Calu3 (cell line): ENCODE measurements at regions of chr6 and their contacts with region 1.

Region 1: GRCh38 chr6:27545271-27546046 is 72.6 kb upstream of the ZNF184 start:
- DNase-seq: peak; percentile 91
- H3K4me3 Mint-ChIP-seq: peak overlapping the region; percentile 76
- H3K27ac Mint-ChIP-seq: peak overlapping the region; percentile 91
- H3K4me1 Mint-ChIP-seq: peaks cover 29% of the 10 kb centered on the region
- H3K27me3 Mint-ChIP-seq: no peaks in the 10 kb centered on the region
- CTCF ChIP-seq: no peak

Region 2: DNA sequence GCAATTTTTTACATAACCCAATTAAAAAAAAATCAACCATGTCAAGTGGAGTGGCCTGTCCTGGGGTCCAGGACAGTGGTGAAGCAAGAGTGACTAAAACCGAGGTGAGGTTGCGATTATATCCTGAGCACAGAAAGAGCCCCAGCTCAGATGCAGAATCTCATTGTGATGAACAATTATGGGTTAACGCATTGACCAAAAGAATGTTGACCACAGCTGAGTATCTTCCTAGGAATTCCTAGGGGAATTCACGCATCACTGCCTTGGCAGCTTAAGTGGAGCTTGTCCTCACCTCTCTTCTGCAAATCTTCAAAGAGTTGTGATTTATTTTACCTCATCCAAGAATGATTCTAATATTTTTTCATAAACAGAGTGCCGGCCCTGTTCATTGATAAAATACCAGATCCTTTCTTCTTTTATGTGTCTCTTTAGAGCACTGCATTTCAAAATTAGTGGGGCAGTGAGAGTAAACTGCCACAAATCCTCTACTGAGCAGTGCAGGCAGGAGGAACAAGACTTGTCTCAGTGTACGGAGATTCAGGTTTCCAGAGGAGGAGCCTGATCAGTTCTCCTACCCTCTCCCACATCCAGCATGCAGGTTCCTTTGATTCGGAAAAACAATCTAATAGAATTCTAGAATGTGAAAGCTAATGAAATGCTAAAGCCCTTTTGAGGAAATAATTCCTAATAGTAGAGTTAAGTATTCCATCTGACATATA is 12.5 kb before region 1 on chr6:
- CTCF ChIA-PET with region 1: interaction called, 12 read pairs
- intact Hi-C with region 1: no loop called
- DNase-seq: no peak
- H3K4me3 Mint-ChIP-seq: no peak overlapping the region
- H3K27ac Mint-ChIP-seq: no peak overlapping the region
- H3K4me1 Mint-ChIP-seq: no peaks in the 10 kb centered on the region
- H3K27me3 Mint-ChIP-seq: no peaks in the 10 kb centered on the region
- CTCF ChIP-seq: no peak

Region 3: DNA sequence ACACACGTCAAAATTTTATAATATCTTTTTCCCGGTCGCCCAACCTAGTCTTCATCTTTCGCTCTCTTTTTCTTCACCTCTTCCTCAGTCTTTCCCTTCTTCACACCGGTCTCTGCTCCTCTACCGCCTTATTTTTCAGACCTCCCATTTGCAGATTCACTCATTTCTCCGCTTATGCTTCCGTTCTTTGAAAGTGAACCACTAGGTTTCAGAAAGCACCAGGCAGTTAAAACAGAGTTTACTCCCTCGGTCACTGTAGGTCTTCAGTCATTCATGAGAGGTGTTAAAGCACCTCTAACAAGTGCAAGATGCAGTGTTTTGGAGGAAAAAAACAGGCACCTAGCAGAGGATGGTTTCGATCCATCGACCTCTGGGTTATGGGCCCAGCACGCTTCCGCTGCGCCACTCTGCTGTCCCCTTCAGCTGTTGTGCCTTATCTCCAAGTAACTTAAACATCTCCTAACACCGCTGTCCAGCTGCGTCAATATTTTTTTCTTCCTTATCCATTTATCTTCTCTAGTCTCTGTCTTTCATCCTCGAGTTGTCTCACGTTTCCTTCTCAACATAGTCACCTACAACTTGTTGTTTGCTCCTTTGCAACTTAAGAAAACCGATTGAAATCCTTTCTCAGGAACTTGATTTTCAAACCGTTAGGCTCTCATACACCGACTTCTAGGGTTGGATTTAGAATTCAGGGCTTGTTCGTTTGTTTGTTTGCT is 47.2 kb after region 1 on chr6:
- CTCF ChIA-PET with region 1: interaction called, 5 read pairs
- intact Hi-C with region 1: loop called (anchors 5 kb)
- DNase-seq: peak; percentile 80
- H3K4me3 Mint-ChIP-seq: no peak overlapping the region
- H3K27ac Mint-ChIP-seq: no peak overlapping the region
- H3K4me1 Mint-ChIP-seq: no peaks in the 10 kb centered on the region
- H3K27me3 Mint-ChIP-seq: no peaks in the 10 kb centered on the region
- CTCF ChIP-seq: no peak